Calu3 (cell line): ENCODE measurements at regions of chr3 and their contacts with region 1.

Region 1: GRCh38 chr3:175338775-175339538 is 479.8 kb downstream of the NAALADL2 start:
- DNase-seq: peak; percentile 72
- H3K4me3 Mint-ChIP-seq: peak overlapping the region; percentile 60
- H3K27ac Mint-ChIP-seq: peak overlapping the region; percentile 76
- H3K4me1 Mint-ChIP-seq: peaks cover 40% of the 10 kb centered on the region
- H3K27me3 Mint-ChIP-seq: no peaks in the 10 kb centered on the region
- CTCF ChIP-seq: no peak

Region 2: GRCh38 chr3:174598885-174599439 is 740.0 kb before region 1 on chr3:
- CTCF ChIA-PET with region 1: no interaction called
- intact Hi-C with region 1: no loop called
- DNase-seq: no peak
- H3K4me3 Mint-ChIP-seq: no peak overlapping the region
- H3K27ac Mint-ChIP-seq: no peak overlapping the region
- H3K4me1 Mint-ChIP-seq: no peaks in the 10 kb centered on the region
- H3K27me3 Mint-ChIP-seq: no peaks in the 10 kb centered on the region
- CTCF ChIP-seq: no peak

Region 3: GRCh38 chr3:175386618-175387017 is 47.7 kb after region 1 on chr3:
- CTCF ChIA-PET with region 1: no interaction called
- intact Hi-C with region 1: loop called (anchors 2 kb)
- DNase-seq: peak; percentile 32
- H3K4me3 Mint-ChIP-seq: no peak overlapping the region
- H3K27ac Mint-ChIP-seq: peak overlapping the region; percentile 11
- H3K4me1 Mint-ChIP-seq: peaks cover 12% of the 10 kb centered on the region
- H3K27me3 Mint-ChIP-seq: no peaks in the 10 kb centered on the region
- CTCF ChIP-seq: no peak